ENCODE measurements at regions of chr11 and their contacts with region 1.

Region 1: DNA sequence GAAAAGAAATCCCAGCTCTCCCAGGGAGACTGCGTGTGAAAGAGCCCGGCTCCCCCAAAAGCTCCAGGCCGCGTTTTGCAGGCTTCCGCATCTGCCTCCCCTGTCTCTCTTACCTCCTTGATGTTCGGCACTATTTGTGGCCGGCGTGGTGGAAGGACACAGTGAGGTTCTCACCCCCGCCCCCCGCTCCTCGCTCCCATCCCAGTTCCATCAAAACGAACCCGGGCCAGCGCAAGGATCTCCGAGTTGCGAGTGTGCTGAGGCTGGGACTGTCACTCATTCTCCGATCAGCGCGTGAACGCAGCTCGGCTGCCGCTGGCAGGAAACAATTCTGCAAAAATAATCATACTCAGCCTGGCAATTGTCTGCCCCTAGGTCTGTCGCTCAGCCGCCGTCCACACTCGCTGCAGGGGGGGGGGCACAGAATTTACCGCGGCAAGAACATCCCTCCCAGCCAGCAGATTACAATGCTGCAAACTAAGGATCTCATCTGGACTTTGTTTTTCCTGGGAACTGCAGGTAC is at the start of gene NCAM1:
- DNase-seq: peak; percentile 39 to 40
- ATAC-seq: peak; percentile 59 to 72 (median 67)
- H3K4me3 ChIP-seq: peak within 1 kb of the TSS; percentile 76
- H3K4me3 Mint-ChIP-seq: peak within 1 kb of the TSS; percentile 97
- H3K27ac ChIP-seq: peak within 1 kb of the TSS; percentile 36
- H3K27ac Mint-ChIP-seq: peak within 1 kb of the TSS; percentile 57 to 92
- H3K4me1 ChIP-seq: peaks cover 17% of the 10 kb centered on the region
- H3K4me1 Mint-ChIP-seq: peaks cover 21 to 38% of the 10 kb centered on the region in 2 donors
- H3K27me3 ChIP-seq: no peaks in the 10 kb centered on the region
- H3K27me3 Mint-ChIP-seq: no peaks in the 10 kb centered on the region
- CTCF ChIP-seq: no peak
- total RNA-seq, gene NCAM1: 129 to 208 (median 187) TPM

Region 2: GRCh38 chr11:112881461-112881860 is 79.7 kb before region 1 on chr11:
- intact Hi-C with region 1: loop called (anchors 5 kb)
- DNase-seq: no peak
- ATAC-seq: no peak
- H3K4me3 ChIP-seq: no peak overlapping the region
- H3K4me3 Mint-ChIP-seq: peak overlapping the region; percentile 88
- H3K27ac ChIP-seq: peak overlapping the region; percentile 61
- H3K27ac Mint-ChIP-seq: no peak overlapping the region
- H3K4me1 ChIP-seq: peaks cover 86% of the 10 kb centered on the region
- H3K4me1 Mint-ChIP-seq: peaks cover 2 to 23% of the 10 kb centered on the region in 2 donors
- H3K27me3 ChIP-seq: no peaks in the 10 kb centered on the region
- H3K27me3 Mint-ChIP-seq: no peaks in the 10 kb centered on the region
- CTCF ChIP-seq: no peak

Region 3: DNA sequence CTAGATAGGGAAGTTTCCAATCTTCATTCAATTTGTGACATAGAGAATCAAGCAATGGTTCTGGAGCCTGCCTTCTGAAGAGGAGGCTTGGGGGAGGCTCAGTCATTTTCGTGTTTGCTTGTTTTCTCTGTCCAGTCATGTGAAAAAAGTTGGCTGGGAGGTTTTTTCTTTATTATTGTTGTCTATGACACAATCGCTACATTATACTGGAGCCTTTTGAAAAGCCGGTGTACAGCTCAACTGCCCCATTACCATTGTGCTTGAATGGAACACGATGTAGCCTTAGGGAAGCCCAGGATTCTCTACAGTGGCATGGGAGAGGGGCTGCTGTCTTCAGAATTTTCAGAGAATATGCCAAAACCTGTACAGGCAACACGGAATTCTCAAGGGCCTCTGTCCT is 57.9 kb before region 1 on chr11:
- intact Hi-C with region 1: no loop called
- DNase-seq: no peak
- ATAC-seq: no peak
- H3K4me3 ChIP-seq: no peak overlapping the region
- H3K4me3 Mint-ChIP-seq: no peak overlapping the region
- H3K27ac ChIP-seq: no peak overlapping the region
- H3K27ac Mint-ChIP-seq: no peak overlapping the region
- H3K4me1 ChIP-seq: no peaks in the 10 kb centered on the region
- H3K4me1 Mint-ChIP-seq: peaks cover 0 to 6% of the 10 kb centered on the region in 2 donors
- H3K27me3 ChIP-seq: no peaks in the 10 kb centered on the region
- H3K27me3 Mint-ChIP-seq: peaks cover 0 to 6% of the 10 kb centered on the region in 2 donors
- CTCF ChIP-seq: no peak

Region 4: DNA sequence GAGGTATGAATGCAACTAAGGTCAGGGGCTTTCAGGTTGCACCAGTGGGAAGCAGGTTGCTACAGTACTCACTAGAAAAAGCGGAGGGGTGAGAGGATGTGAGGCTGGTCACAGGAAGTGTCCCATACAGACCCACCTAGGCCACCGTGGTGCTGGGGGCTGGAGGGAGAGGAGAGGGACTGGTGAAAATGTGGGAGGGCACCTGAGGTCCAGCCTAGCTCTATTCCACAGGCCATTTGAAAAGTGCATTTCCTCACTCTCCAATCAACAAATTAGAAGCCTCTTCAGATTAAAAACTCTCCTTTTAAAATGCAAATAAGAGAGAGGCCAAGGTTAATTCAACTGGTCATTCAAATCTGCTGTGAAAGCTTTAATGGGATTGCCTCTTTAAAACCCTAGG is 38.6 kb before region 1 on chr11:
- intact Hi-C with region 1: no loop called
- DNase-seq: no peak
- ATAC-seq: no peak
- H3K4me3 ChIP-seq: no peak overlapping the region
- H3K4me3 Mint-ChIP-seq: no peak overlapping the region
- H3K27ac ChIP-seq: no peak overlapping the region
- H3K27ac Mint-ChIP-seq: no peak overlapping the region
- H3K4me1 ChIP-seq: no peaks in the 10 kb centered on the region
- H3K4me1 Mint-ChIP-seq: peaks cover 5 to 7% of the 10 kb centered on the region in 2 donors
- H3K27me3 ChIP-seq: peaks cover 2% of the 10 kb centered on the region
- H3K27me3 Mint-ChIP-seq: peaks cover 0 to 5% of the 10 kb centered on the region in 2 donors
- CTCF ChIP-seq: no peak